ENCODE measurements at regions of chr1 and their contacts with region 1.

Region 1: GRCh38 chr1:173507205-173507846 is 30.2 kb downstream of the PRDX6 start:
- DNase-seq: peak; percentile 41
- H3K4me3 Mint-ChIP-seq: peak overlapping the region; percentile 37
- H3K27ac Mint-ChIP-seq: peak overlapping the region; percentile 40
- H3K4me1 Mint-ChIP-seq: peaks cover 32% of the 10 kb centered on the region
- H3K27me3 Mint-ChIP-seq: no peaks in the 10 kb centered on the region
- CTCF ChIP-seq: no peak

Region 2: DNA sequence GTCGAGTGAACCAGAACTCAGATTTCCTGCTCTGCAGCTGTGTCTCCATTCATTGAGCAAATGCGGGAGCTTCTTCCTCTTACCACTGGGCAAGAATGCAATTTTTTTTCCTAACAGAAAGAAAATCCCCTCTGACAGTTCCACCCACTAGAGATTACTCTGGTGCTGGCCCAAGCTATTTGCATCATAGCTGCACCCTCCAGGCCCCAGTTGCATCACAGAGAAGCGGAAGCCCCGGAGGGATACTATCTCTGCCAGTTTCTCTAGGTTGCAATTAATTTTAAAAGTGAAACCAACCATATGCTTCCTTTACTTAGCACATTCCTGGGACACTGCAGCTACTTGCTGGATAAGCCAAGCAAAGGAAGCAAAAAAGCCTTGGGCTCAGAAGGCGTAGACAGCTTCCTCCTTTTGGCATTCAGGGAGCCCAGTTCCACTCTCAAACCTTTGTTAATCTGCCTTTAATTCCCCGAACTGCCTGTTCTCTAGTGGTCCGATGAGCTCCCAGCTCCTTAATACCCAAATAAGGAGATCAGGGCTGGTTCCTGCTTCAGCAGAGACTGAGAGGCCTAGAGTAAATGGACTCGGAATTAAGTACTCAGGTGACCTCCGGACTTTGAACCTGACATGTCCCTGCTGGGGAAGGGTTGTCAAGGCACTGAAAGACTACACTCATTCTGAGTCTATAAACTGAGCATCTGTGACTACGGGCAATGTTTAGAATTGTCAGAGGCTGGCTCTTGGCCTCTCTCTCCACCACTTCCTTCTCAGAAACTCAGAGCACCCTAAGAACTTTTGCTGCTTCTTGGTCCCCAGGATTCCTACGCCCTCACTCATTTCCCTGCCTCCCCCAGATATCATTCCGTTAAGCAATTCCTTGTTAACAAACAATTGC is 384.1 kb before region 1 on chr1:
- CTCF ChIA-PET with region 1: no interaction called
- intact Hi-C with region 1: no loop called
- DNase-seq: peak; percentile 55
- H3K4me3 Mint-ChIP-seq: peak overlapping the region; percentile 65
- H3K27ac Mint-ChIP-seq: peak overlapping the region; percentile 88
- H3K4me1 Mint-ChIP-seq: peaks cover 50% of the 10 kb centered on the region
- H3K27me3 Mint-ChIP-seq: no peaks in the 10 kb centered on the region
- CTCF ChIP-seq: no peak

Region 3: GRCh38 chr1:173315296-173315695 is 192.0 kb before region 1 on chr1:
- CTCF ChIA-PET with region 1: no interaction called
- intact Hi-C with region 1: no loop called
- DNase-seq: no peak
- H3K4me3 Mint-ChIP-seq: no peak overlapping the region
- H3K27ac Mint-ChIP-seq: no peak overlapping the region
- H3K4me1 Mint-ChIP-seq: no peaks in the 10 kb centered on the region
- H3K27me3 Mint-ChIP-seq: peaks cover 11% of the 10 kb centered on the region
- CTCF ChIP-seq: no peak

Region 4: DNA sequence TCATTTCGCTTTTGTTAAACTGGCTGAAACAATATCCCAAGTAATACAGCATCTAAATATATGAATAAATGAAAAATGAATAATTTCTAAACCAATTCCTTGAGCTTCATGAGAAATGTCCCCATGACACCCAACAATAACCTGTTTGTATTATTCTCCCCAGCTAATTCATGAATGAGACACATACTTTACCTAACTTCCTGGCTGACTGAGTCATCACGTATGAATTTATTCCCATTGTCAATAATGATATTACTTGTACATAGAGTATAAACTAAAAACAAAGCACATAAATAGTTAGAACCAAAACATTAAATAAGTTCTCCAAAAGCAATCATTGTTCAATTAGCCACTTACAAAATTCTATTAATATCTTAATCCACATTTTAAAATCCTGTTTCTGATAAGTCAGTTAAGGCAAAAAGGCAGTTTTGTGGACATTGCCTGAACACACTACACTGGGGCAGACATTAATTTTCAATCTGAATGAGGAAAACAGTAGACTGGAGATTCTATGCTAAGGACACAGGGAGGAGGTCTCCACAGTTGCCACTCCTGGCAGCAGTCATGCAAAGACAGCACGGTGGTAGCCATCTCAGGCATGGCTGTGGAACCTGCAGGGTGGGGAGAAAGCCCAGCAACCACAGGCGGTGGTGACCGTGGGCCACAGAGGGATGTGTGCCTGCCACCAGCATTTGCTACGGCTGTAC is 47.4 kb after region 1 on chr1:
- CTCF ChIA-PET with region 1: no interaction called
- intact Hi-C with region 1: loop called (anchors 2 kb)
- DNase-seq: peak; percentile 17
- H3K4me3 Mint-ChIP-seq: no peak overlapping the region
- H3K27ac Mint-ChIP-seq: peak overlapping the region; percentile 94
- H3K4me1 Mint-ChIP-seq: peaks cover 22% of the 10 kb centered on the region
- H3K27me3 Mint-ChIP-seq: no peaks in the 10 kb centered on the region
- CTCF ChIP-seq: no peak

Region 5: GRCh38 chr1:173669491-173669941 is 162.2 kb after region 1 on chr1 and contains the start of gene ANKRD45:
- CTCF ChIA-PET with region 1: no interaction called
- intact Hi-C with region 1: no loop called
- DNase-seq: peak; percentile 32
- H3K4me3 Mint-ChIP-seq: peak within 1 kb of the TSS; percentile 45
- H3K27ac Mint-ChIP-seq: no peak within 1 kb of the TSS
- H3K4me1 Mint-ChIP-seq: peaks cover 8% of the 10 kb centered on the region
- H3K27me3 Mint-ChIP-seq: peaks cover 17% of the 10 kb centered on the region
- CTCF ChIP-seq: no peak
- total RNA-seq, gene ANKRD45: not detected in 2 replicates

Region 6: DNA sequence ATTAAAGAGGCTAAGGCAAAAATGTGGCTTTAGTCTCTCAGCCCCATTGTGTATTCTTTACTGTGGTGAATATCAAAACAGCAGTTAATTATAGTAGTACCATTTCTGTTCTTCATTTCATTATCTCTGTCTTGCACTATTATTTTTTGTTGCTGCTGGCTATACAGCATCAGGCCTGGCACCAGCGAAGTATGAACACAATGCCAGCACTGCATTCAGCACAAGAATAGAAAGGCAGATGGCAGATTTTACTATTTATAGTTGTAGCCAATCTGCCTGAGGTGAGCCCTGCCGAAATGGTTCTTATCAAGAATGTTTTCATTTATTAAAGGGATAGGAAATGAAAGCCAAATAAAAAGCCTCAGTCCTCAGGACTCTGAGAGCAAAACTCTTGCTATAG is 1012.5 kb after region 1 on chr1:
- CTCF ChIA-PET with region 1: no interaction called
- intact Hi-C with region 1: no loop called
- DNase-seq: no peak
- H3K4me3 Mint-ChIP-seq: no peak overlapping the region
- H3K27ac Mint-ChIP-seq: no peak overlapping the region
- H3K4me1 Mint-ChIP-seq: no peaks in the 10 kb centered on the region
- H3K27me3 Mint-ChIP-seq: no peaks in the 10 kb centered on the region
- CTCF ChIP-seq: no peak